Right ventricle myocardium superior (tissue), 1 donor: ENCODE measurements at regions of chr15 and their contacts with region 1.

Region 1: DNA sequence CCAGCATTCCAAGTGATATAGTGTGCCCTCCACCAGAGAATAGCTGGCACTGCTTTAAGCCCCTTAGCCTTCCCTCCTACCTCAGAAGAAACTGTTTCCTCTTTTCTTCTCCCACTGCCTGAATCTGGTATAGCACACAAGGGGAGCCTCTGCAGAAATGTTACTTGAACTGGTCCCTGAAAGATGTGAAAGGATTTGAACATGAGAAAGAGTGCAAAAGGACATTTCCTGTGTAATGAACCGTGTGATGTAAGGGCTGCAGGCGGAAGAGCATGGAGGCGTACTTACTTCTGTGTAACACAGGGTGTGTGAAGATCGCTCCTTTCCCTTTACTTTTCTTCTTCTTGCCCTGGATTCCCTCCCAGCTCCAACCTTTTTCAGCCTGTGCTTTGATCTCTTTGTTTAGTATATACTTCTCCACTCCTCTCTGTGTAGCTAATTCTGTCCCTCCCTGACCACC is 8.4 kb downstream of the TMOD3 start:
- DNase-seq: no peak
- ATAC-seq: peak; percentile 22

Region 2: DNA sequence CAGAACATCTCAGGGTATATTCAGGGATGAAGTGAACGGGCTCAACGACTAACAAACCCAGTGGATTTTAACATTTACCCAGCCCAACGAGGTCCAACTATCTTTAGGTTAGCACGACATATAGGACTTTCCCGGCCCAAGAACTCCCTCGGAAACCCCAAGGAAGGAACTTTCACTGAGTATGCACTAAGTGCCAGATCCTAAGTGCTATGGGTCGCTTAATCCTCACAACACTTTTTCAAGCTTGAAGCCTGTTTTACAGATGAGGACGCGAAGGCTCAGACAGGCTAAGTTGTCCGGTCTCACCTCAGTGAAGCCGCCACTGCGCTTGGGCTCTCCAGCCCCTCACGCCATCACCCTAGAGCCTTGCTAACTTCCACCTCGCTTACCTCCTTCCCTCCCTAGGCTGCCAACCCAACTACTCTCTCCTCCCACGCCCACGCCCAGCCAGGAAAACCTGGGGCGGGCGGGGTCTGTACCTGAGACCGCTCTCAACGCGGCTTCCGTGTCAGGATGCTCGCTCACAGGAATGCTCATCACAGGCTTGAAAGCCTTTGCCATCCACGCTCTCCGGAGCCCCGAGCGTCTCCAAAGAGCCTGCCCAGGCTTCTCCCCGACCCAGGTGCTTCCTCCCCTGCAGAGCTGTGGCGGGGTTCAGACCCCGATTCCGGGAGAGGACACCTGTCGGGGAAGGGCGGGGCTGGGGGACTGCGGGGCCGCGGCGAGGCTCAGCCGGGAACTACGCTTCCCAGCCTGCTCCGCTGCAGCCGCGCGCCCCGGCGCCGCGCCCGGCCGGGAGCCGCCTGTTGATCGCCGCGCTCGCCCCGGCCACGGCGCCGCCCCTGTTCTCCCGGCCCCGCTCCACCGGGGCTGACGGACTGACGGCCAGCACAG is 86.8 kb before region 1 on chr15 and contains the start of gene TMOD2:
- intact Hi-C with region 1: no loop called
- DNase-seq: peak; percentile 70
- ATAC-seq: peak; percentile 97
- total RNA-seq, gene TMOD2: 7.3 TPM

Region 3: DNA sequence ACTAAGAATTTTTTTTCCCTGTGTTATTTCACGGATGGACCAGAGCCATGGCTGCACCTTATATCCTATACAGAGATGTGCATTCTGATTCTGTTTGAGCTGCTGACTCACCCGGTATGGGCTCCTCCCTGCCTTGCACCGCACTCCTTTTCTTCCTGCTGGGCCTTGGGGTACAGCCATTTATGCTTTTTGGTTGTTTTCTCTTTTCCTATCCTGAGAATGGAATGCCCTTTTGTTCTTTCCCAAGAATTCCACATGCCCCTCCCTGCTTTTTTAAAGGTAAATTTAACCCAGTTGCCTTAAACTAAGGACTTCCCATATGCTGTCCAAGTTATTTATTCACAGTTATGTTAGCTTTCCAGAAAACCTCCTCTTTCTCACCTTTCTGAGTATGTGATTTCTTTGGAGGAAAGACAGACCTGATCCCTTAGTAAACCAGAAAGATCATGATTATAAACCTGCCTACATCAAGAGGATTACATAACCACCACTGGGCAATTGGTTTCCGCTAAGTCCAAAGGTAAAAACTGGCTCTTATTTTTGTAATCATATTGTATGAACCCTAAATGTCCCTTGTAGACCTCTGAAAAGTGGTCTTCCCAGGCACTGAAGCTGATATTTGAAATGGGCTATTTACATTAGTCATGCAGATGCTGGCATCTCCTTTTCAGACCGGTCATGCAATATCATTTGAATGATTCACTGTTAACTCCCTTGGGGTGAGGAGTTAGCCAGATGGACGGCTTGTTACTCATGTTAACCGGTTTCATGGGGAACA is 37.1 kb after region 1 on chr15:
- intact Hi-C with region 1: loop called (anchors 5 kb)
- DNase-seq: no peak
- ATAC-seq: peak; percentile 76

Region 4: GRCh38 chr15:52154896-52155865 is 317.4 kb after region 1 on chr15:
- intact Hi-C with region 1: no loop called
- DNase-seq: no peak
- ATAC-seq: no peak